Right lobe of liver (tissue), 6 donors: ENCODE measurements at regions of chr3 and their contacts with region 1.

Region 1: GRCh38 chr3:186976837-186977750 is 46.8 kb downstream of the ST6GAL1 start:
- DNase-seq: peak; percentile 80 to 86 (median 82)
- ATAC-seq: peak; percentile 56 to 75 (median 68)
- H3K4me3 ChIP-seq: peak overlapping the region in 2 of 3 donors; percentile 7 to 15
- H3K27ac ChIP-seq: peak overlapping the region; percentile 90 to 94 (median 93)
- H3K4me1 ChIP-seq: peaks cover 0 to 77% (median 24%) of the 10 kb centered on the region in 4 donors
- H3K27me3 ChIP-seq: no peaks in the 10 kb centered on the region
- CTCF ChIP-seq: peak in 1 of 4 donors; percentile 7
- POLR2A ChIP-seq: peak; percentile 60

Region 2: GRCh38 chr3:186815435-186815834 is 161.7 kb before region 1 on chr3:
- intact Hi-C with region 1: no loop called
- DNase-seq: no peak
- ATAC-seq: no peak
- H3K4me3 ChIP-seq: no peak overlapping the region
- H3K27ac ChIP-seq: no peak overlapping the region
- H3K4me1 ChIP-seq: no peaks in the 10 kb centered on the region
- H3K27me3 ChIP-seq: no peaks in the 10 kb centered on the region
- CTCF ChIP-seq: no peak
- POLR2A ChIP-seq: no peak

Region 3: GRCh38 chr3:187041362-187042307 is 64.5 kb after region 1 on chr3:
- intact Hi-C with region 1: loop called in 1 of 2 experiments (anchors 10 kb)
- DNase-seq: no peak
- ATAC-seq: peak; percentile 34 to 55 (median 46)
- H3K4me3 ChIP-seq: peak overlapping the region; percentile 40 to 67 (median 63)
- H3K27ac ChIP-seq: peak overlapping the region; percentile 85 to 97 (median 95)
- H3K4me1 ChIP-seq: peaks cover 0 to 59% (median 23%) of the 10 kb centered on the region in 4 donors
- H3K27me3 ChIP-seq: no peaks in the 10 kb centered on the region
- CTCF ChIP-seq: no peak
- POLR2A ChIP-seq: peak; percentile 66

Region 4: GRCh38 chr3:187434524-187434923 is 457.4 kb after region 1 on chr3:
- intact Hi-C with region 1: no loop called
- DNase-seq: no peak
- ATAC-seq: no peak
- H3K4me3 ChIP-seq: no peak overlapping the region
- H3K27ac ChIP-seq: no peak overlapping the region
- H3K4me1 ChIP-seq: no peaks in the 10 kb centered on the region
- H3K27me3 ChIP-seq: no peaks in the 10 kb centered on the region
- CTCF ChIP-seq: no peak
- POLR2A ChIP-seq: no peak